B cell (primary cell): ENCODE measurements at regions of chr6 and their contacts with region 1.

Region 1: GRCh38 chr6:43334466-43335095 is 26.0 kb upstream of the CRIP3 start:
- DNase-seq: peak; percentile 49
- ATAC-seq: no peak
- H3K4me3 ChIP-seq: no peak overlapping the region
- H3K4me3 Mint-ChIP-seq: no peak overlapping the region
- H3K27ac ChIP-seq: peak overlapping the region in 1 of 2 donors; percentile 48
- H3K27ac Mint-ChIP-seq: peak overlapping the region; percentile 57
- H3K4me1 ChIP-seq: peaks cover 28 to 29% of the 10 kb centered on the region in 2 donors
- H3K4me1 Mint-ChIP-seq: peaks cover 43% of the 10 kb centered on the region
- H3K27me3 ChIP-seq: no peaks in the 10 kb centered on the region
- H3K27me3 Mint-ChIP-seq: no peaks in the 10 kb centered on the region
- CTCF ChIP-seq: peak; percentile 51

Region 2: GRCh38 chr6:43263314-43264178 is 71.0 kb before region 1 on chr6:
- CTCF ChIA-PET with region 1: interaction called, 32 read pairs
- POLR2A ChIA-PET with region 1: no interaction called
- intact Hi-C with region 1: loop called (anchors 1 kb)
- DNase-seq: peak; percentile 84
- ATAC-seq: peak; percentile 98
- H3K4me3 ChIP-seq: no peak overlapping the region
- H3K4me3 Mint-ChIP-seq: no peak overlapping the region
- H3K27ac ChIP-seq: no peak overlapping the region
- H3K27ac Mint-ChIP-seq: no peak overlapping the region
- H3K4me1 ChIP-seq: no peaks in the 10 kb centered on the region
- H3K4me1 Mint-ChIP-seq: peaks cover 8% of the 10 kb centered on the region
- H3K27me3 ChIP-seq: peaks cover 0 to under 1% (median 0%) of the 10 kb centered on the region in 4 experiments
- H3K27me3 Mint-ChIP-seq: peaks cover 4% of the 10 kb centered on the region
- CTCF ChIP-seq: peak; percentile 84

Region 3: DNA sequence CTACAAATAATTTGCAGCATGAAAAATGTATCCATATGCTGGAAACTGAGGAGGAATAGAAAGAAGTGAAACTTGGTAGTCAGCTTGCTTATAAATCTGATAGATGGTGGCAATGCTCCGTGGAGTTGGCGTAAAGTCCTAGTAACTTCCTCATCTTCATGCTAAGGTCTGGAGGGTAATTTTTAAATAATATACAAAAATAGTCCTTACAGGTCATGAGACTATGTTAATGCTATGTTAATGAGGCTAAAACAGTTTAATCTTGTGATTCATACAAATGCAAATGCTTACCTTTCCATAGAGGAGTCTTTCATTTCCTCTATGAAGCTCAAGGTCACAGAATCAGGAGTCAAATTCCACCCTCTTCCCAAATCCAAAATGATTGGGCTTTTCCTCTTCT is 16.6 kb before region 1 on chr6:
- CTCF ChIA-PET with region 1: interaction called, 23 read pairs
- POLR2A ChIA-PET with region 1: interaction called, 3 read pairs
- intact Hi-C with region 1: no loop called
- DNase-seq: peak; percentile 71
- ATAC-seq: peak; percentile 51
- H3K4me3 ChIP-seq: peak overlapping the region in 1 of 5 experiments; percentile 8
- H3K4me3 Mint-ChIP-seq: peak overlapping the region; percentile 79
- H3K27ac ChIP-seq: peak overlapping the region; percentile 76 to 83
- H3K27ac Mint-ChIP-seq: peak overlapping the region; percentile 95
- H3K4me1 ChIP-seq: peaks cover 60 to 69% of the 10 kb centered on the region in 2 donors
- H3K4me1 Mint-ChIP-seq: peaks cover 81% of the 10 kb centered on the region
- H3K27me3 ChIP-seq: no peaks in the 10 kb centered on the region
- H3K27me3 Mint-ChIP-seq: no peaks in the 10 kb centered on the region
- CTCF ChIP-seq: no peak

Region 4: GRCh38 chr6:43369174-43370022 is 34.8 kb after region 1 on chr6 and contains the start of gene ZNF318:
- CTCF ChIA-PET with region 1: no interaction called
- POLR2A ChIA-PET with region 1: no interaction called
- intact Hi-C with region 1: no loop called
- DNase-seq: peak; percentile 98
- ATAC-seq: peak; percentile 90
- H3K4me3 ChIP-seq: peak within 1 kb of the TSS; percentile 83 to 95 (median 88)
- H3K4me3 Mint-ChIP-seq: peak within 1 kb of the TSS; percentile 98
- H3K27ac ChIP-seq: peak within 1 kb of the TSS; percentile 92 to 94
- H3K27ac Mint-ChIP-seq: peak within 1 kb of the TSS; percentile 97
- H3K4me1 ChIP-seq: peaks cover 64 to 69% of the 10 kb centered on the region in 2 donors
- H3K4me1 Mint-ChIP-seq: peaks cover 72% of the 10 kb centered on the region
- H3K27me3 ChIP-seq: no peaks in the 10 kb centered on the region
- H3K27me3 Mint-ChIP-seq: no peaks in the 10 kb centered on the region
- CTCF ChIP-seq: no peak
- total RNA-seq, gene ZNF318: 79.7 and 80.9 TPM in 2 replicates

Region 5: GRCh38 chr6:43396407-43397149 is 62.0 kb after region 1 on chr6:
- CTCF ChIA-PET with region 1: interaction called, 11 read pairs
- POLR2A ChIA-PET with region 1: no interaction called
- intact Hi-C with region 1: no loop called
- DNase-seq: no peak
- ATAC-seq: no peak
- H3K4me3 ChIP-seq: no peak overlapping the region
- H3K4me3 Mint-ChIP-seq: no peak overlapping the region
- H3K27ac ChIP-seq: no peak overlapping the region
- H3K27ac Mint-ChIP-seq: no peak overlapping the region
- H3K4me1 ChIP-seq: peaks cover 20 to 22% of the 10 kb centered on the region in 2 donors
- H3K4me1 Mint-ChIP-seq: peaks cover 27% of the 10 kb centered on the region
- H3K27me3 ChIP-seq: peaks cover 0 to 5% (median 0%) of the 10 kb centered on the region in 4 experiments
- H3K27me3 Mint-ChIP-seq: no peaks in the 10 kb centered on the region
- CTCF ChIP-seq: no peak